ENCODE measurements at regions of chr11 and their contacts with region 1.

Region 1: DNA sequence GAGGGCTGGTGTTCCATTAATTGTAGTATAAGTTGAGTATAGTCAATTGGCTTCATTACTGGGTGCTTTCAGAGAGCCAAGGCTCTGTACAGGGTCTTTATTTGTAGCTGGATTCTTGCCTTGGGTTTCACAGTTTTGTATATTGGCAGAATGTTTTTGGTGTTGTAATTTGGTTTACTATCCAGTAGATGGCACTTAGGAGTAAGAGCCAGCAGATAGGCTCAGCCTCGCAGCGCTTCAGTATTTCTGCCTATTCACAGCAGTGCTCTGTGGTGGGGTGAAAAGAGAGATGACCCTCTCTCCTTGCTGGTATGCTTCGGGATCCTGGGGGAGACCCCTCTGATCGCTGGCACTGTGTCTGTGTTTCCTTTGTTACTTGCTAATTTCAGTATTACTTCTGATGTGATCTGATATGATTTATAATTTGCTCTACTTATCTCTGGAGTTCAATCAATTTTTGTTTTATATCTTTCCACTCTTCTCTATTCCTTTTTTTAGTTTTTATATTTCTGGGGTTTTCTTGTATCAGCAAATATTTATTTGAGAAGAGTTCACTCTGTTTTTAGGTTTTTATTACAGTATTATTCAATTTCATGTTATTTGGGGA is 52.2 kb downstream of the ANO5 start:
- DNase-seq: peak in 5 of 9 donors; percentile 6 to 30 (median 13)
- ATAC-seq: peak; percentile 65
- H3K4me3 ChIP-seq: no peak overlapping the region
- H3K4me3 Mint-ChIP-seq: no peak overlapping the region
- H3K27ac ChIP-seq: no peak overlapping the region
- H3K27ac Mint-ChIP-seq: no peak overlapping the region
- H3K4me1 ChIP-seq: no peaks in the 10 kb centered on the region
- H3K4me1 Mint-ChIP-seq: no peaks in the 10 kb centered on the region
- H3K27me3 ChIP-seq: no peaks in the 10 kb centered on the region
- H3K27me3 Mint-ChIP-seq: peaks cover 2 to 36% (median 21%) of the 10 kb centered on the region in 5 donors

Region 2: GRCh38 chr11:22276535-22276934 is 31.4 kb after region 1 on chr11:
- CTCF ChIA-PET with region 1: no interaction called
- POLR2A ChIA-PET with region 1: no interaction called
- intact Hi-C with region 1: no loop called
- DNase-seq: no peak
- ATAC-seq: no peak
- H3K4me3 ChIP-seq: no peak overlapping the region
- H3K4me3 Mint-ChIP-seq: no peak overlapping the region
- H3K27ac ChIP-seq: no peak overlapping the region
- H3K27ac Mint-ChIP-seq: no peak overlapping the region
- H3K4me1 ChIP-seq: no peaks in the 10 kb centered on the region
- H3K4me1 Mint-ChIP-seq: no peaks in the 10 kb centered on the region
- H3K27me3 ChIP-seq: no peaks in the 10 kb centered on the region
- H3K27me3 Mint-ChIP-seq: peaks cover 0 to 12% (median 0%) of the 10 kb centered on the region in 5 donors

Region 3: DNA sequence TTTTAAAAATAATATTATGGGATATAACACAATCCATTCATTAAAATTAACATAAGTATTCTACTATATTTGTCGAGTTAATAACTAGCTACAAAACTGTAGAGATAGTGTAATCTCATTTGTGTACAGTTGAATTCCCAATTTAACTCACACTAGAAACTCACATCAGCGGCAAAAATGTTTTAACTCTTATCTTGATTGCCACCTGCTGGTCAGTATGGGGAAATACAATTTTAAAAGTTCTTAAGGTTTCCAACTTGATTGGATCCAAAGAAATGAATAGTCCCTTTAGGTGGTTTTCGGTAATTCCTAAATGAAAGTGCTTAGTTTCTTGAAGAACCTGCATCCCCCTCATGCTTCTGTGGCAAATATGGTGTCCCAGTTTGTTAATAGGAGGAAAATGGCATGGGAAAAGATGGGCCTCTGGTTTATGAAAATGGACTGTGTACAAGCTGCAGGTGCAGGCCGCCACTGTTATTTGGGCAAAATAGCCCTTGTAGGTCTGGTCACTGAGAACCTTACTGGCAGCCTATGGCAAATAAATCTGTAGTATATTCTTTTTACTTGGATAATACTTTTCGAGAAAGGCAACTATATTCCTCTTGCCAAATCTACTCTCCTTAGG is 59.4 kb after region 1 on chr11:
- CTCF ChIA-PET with region 1: no interaction called
- POLR2A ChIA-PET with region 1: no interaction called
- intact Hi-C with region 1: loop called (anchors 1 kb)
- DNase-seq: peak in 5 of 9 donors; percentile 6 to 19 (median 13)
- ATAC-seq: peak; percentile 48
- H3K4me3 ChIP-seq: no peak overlapping the region
- H3K4me3 Mint-ChIP-seq: no peak overlapping the region
- H3K27ac ChIP-seq: no peak overlapping the region
- H3K27ac Mint-ChIP-seq: no peak overlapping the region
- H3K4me1 ChIP-seq: no peaks in the 10 kb centered on the region
- H3K4me1 Mint-ChIP-seq: no peaks in the 10 kb centered on the region
- H3K27me3 ChIP-seq: peaks cover 0 to 4% of the 10 kb centered on the region in 2 donors
- H3K27me3 Mint-ChIP-seq: peaks cover 2 to 31% (median 14%) of the 10 kb centered on the region in 5 donors

Region 4: GRCh38 chr11:22432291-22433093 is 187.4 kb after region 1 on chr11:
- CTCF ChIA-PET with region 1: no interaction called
- POLR2A ChIA-PET with region 1: no interaction called
- intact Hi-C with region 1: no loop called
- DNase-seq: peak in 3 of 9 donors; percentile 0 to 15 (median 0)
- ATAC-seq: no peak
- H3K4me3 ChIP-seq: no peak overlapping the region
- H3K4me3 Mint-ChIP-seq: peak overlapping the region; percentile 34 to 90 (median 57)
- H3K27ac ChIP-seq: no peak overlapping the region
- H3K27ac Mint-ChIP-seq: peak overlapping the region in 1 of 9 donors; percentile 56
- H3K4me1 ChIP-seq: no peaks in the 10 kb centered on the region
- H3K4me1 Mint-ChIP-seq: peaks cover 4 to 17% (median 15%) of the 10 kb centered on the region in 7 donors
- H3K27me3 ChIP-seq: no peaks in the 10 kb centered on the region
- H3K27me3 Mint-ChIP-seq: peaks cover 11 to 47% (median 32%) of the 10 kb centered on the region in 5 donors

Measured in naive thymus-derived CD4-positive, alpha-beta T cell (primary cell).